Panc1 (cell line): ENCODE measurements at regions of chr14 and their contacts with region 1.

Region 1: GRCh38 chr14:75648066-75648838 is 12.4 kb downstream of the ERG28 start:
- DNase-seq: peak; percentile 92
- ATAC-seq: peak; percentile 95
- H3K4me3 ChIP-seq: no peak overlapping the region
- H3K27ac ChIP-seq: peak overlapping the region; percentile 68
- H3K4me1 ChIP-seq: peaks cover 23% of the 10 kb centered on the region
- H3K27me3 ChIP-seq: no peaks in the 10 kb centered on the region
- CTCF ChIP-seq: no peak

Region 2: GRCh38 chr14:75497191-75497590 is 151.1 kb before region 1 on chr14:
- CTCF ChIA-PET with region 1: no interaction called
- POLR2A ChIA-PET with region 1: no interaction called
- in situ Hi-C with region 1: no loop called
- intact Hi-C with region 1: no loop called
- DNase-seq: no peak
- ATAC-seq: no peak
- H3K4me3 ChIP-seq: no peak overlapping the region
- H3K27ac ChIP-seq: no peak overlapping the region
- H3K4me1 ChIP-seq: no peaks in the 10 kb centered on the region
- H3K27me3 ChIP-seq: no peaks in the 10 kb centered on the region
- CTCF ChIP-seq: no peak

Region 3: GRCh38 chr14:75518625-75519024 is 129.6 kb before region 1 on chr14:
- CTCF ChIA-PET with region 1: interaction called, 10 read pairs
- POLR2A ChIA-PET with region 1: no interaction called
- in situ Hi-C with region 1: no loop called
- intact Hi-C with region 1: no loop called
- DNase-seq: peak; percentile 32
- ATAC-seq: peak; percentile 51; the same call in 1 of the 2 replicates
- H3K4me3 ChIP-seq: no peak overlapping the region
- H3K27ac ChIP-seq: no peak overlapping the region
- H3K4me1 ChIP-seq: no peaks in the 10 kb centered on the region
- H3K27me3 ChIP-seq: no peaks in the 10 kb centered on the region
- CTCF ChIP-seq: peak; percentile 41

Region 4: GRCh38 chr14:76352639-76353281 is 704.5 kb after region 1 on chr14:
- CTCF ChIA-PET with region 1: interaction called, 10 read pairs
- POLR2A ChIA-PET with region 1: no interaction called
- in situ Hi-C with region 1: no loop called
- intact Hi-C with region 1: no loop called
- DNase-seq: no peak
- ATAC-seq: peak; percentile 86
- H3K4me3 ChIP-seq: peak overlapping the region in 1 of 2 experiments; percentile 31; a peak in 2 of 4 replicates
- H3K27ac ChIP-seq: no peak overlapping the region
- H3K4me1 ChIP-seq: no peaks in the 10 kb centered on the region
- H3K27me3 ChIP-seq: peaks cover 2% of the 10 kb centered on the region; the same call in 1 of the 2 replicates
- CTCF ChIP-seq: peak; percentile 91